ENCODE measurements at regions of chr10 and their contacts with region 1.

Region 1: DNA sequence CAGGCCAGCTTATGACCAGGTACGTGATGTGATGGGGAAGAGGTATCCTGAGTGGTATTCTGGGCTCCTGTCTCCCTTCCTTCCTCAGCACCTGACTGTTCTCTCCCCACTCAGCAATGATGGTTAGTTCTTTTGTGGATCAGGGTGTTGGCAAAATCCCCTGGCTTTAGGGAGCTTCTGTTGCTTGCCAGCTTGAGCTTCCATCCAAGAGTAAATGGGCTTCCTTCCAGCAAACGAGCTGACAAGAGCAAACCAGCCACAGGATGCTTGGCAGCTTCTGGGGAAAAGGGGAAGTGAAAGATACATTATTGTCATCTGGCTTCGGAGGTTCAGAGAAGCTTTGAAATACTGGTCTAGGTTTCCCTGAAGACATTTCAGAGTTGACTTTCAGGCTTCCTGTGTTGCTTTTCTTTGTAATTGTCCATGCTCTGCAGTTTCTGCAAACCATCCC is 5.2 kb downstream of the DUSP5 start:
- DNase-seq: peak; percentile 46
- ATAC-seq: peak; percentile 11
- H3K4me3 Mint-ChIP-seq: peak overlapping the region; percentile 95
- H3K27ac Mint-ChIP-seq: peak overlapping the region; percentile 94
- H3K4me1 Mint-ChIP-seq: peaks cover 79% of the 10 kb centered on the region
- H3K27me3 Mint-ChIP-seq: no peaks in the 10 kb centered on the region

Region 2: GRCh38 chr10:109282510-109282909 is 1220.4 kb before region 1 on chr10:
- CTCF ChIA-PET with region 1: no interaction called
- POLR2A ChIA-PET with region 1: no interaction called
- intact Hi-C with region 1: no loop called
- DNase-seq: no peak
- ATAC-seq: no peak
- H3K4me3 Mint-ChIP-seq: no peak overlapping the region
- H3K27ac Mint-ChIP-seq: no peak overlapping the region
- H3K4me1 Mint-ChIP-seq: no peaks in the 10 kb centered on the region
- H3K27me3 Mint-ChIP-seq: no peaks in the 10 kb centered on the region

Region 3: GRCh38 chr10:110530131-110530831 is 27.4 kb after region 1 on chr10:
- CTCF ChIA-PET with region 1: interaction called, 18 read pairs
- POLR2A ChIA-PET with region 1: interaction called, 4 read pairs
- intact Hi-C with region 1: loop called (anchors 1 kb)
- DNase-seq: peak; percentile 38
- ATAC-seq: no peak
- H3K4me3 Mint-ChIP-seq: no peak overlapping the region
- H3K27ac Mint-ChIP-seq: no peak overlapping the region
- H3K4me1 Mint-ChIP-seq: peaks cover 60% of the 10 kb centered on the region
- H3K27me3 Mint-ChIP-seq: peaks cover 3% of the 10 kb centered on the region

Region 4: GRCh38 chr10:110535958-110536891 is 33.3 kb after region 1 on chr10:
- CTCF ChIA-PET with region 1: interaction called, 6 read pairs
- POLR2A ChIA-PET with region 1: no interaction called
- intact Hi-C with region 1: loop called (anchors 1 kb)
- DNase-seq: peak; percentile 87
- ATAC-seq: peak; percentile 93
- H3K4me3 Mint-ChIP-seq: peak overlapping the region; percentile 15
- H3K27ac Mint-ChIP-seq: peak overlapping the region; percentile 79
- H3K4me1 Mint-ChIP-seq: peaks cover 37% of the 10 kb centered on the region
- H3K27me3 Mint-ChIP-seq: peaks cover 3% of the 10 kb centered on the region

Region 5: GRCh38 chr10:110547139-110547761 is 44.4 kb after region 1 on chr10:
- CTCF ChIA-PET with region 1: interaction called, 20 read pairs
- POLR2A ChIA-PET with region 1: interaction called, 6 read pairs
- intact Hi-C with region 1: loop called in 1 of 2 experiments (anchors 2 kb)
- DNase-seq: no peak
- ATAC-seq: peak; percentile 84
- H3K4me3 Mint-ChIP-seq: no peak overlapping the region
- H3K27ac Mint-ChIP-seq: peak overlapping the region; percentile 56
- H3K4me1 Mint-ChIP-seq: peaks cover 8% of the 10 kb centered on the region
- H3K27me3 Mint-ChIP-seq: peaks cover 6% of the 10 kb centered on the region

Region 6: DNA sequence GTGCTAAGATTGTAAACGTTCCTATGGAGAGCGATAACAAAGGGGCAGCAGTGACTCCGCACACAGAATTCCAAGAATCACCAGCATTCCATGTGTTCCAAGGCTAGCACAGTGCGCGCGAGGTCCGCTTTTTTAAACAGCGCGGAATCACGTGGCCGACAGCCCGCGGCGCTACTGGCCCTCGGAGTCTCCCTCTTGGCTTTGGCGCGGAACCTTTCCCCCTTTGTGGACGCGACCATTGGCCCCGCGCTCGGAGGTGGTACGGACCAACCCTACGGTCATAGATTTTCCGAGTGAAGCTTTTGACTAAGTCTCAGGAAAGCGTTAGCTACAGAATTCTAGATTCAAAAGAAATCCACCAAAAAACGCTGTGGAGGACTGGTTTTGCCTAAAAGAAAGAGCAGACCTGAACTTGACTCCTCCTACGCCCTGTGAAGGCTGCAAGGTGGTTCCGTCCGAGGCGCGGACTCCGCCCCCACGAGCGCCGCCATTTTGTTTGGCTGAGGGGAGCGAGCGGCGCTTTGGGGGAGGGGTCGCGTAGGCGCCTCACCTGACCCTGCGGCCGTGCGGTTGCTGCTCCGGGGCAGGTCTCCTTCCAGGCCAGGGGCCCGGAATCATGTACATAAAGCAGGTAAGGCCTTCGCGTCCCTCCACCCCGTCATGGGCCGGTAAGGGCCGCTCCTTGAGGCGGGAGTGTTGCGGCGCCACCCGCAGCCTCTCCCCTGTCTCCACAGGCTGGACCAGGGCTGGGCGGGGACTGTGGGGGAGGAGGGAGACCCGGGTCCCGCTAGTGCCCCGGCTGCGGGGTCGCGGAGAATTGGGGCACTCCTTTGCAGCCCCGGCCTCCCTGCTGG is 64.6 kb after region 1 on chr10 and contains the start of gene SMC3:
- CTCF ChIA-PET with region 1: interaction called, 4 read pairs
- POLR2A ChIA-PET with region 1: no interaction called
- intact Hi-C with region 1: loop called in 1 of 2 experiments (anchors 1 kb)
- DNase-seq: peak; percentile 95
- ATAC-seq: peak; percentile 84
- H3K4me3 Mint-ChIP-seq: peak within 1 kb of the TSS; percentile 93
- H3K27ac Mint-ChIP-seq: peak within 1 kb of the TSS; percentile 99
- H3K4me1 Mint-ChIP-seq: peaks cover 35% of the 10 kb centered on the region
- H3K27me3 Mint-ChIP-seq: peaks cover 13% of the 10 kb centered on the region
- total RNA-seq, gene SMC3: 76.8 to 83.5 TPM

Measured in activated CD4-positive, alpha-beta T cell treated with anti-CD3 and anti-CD28 coated beads for 36 hours (primary cell).